Right ventricle myocardium inferior (tissue), 1 donor: ENCODE measurements at regions of chr11 and their contacts with region 1.

Region 1: DNA sequence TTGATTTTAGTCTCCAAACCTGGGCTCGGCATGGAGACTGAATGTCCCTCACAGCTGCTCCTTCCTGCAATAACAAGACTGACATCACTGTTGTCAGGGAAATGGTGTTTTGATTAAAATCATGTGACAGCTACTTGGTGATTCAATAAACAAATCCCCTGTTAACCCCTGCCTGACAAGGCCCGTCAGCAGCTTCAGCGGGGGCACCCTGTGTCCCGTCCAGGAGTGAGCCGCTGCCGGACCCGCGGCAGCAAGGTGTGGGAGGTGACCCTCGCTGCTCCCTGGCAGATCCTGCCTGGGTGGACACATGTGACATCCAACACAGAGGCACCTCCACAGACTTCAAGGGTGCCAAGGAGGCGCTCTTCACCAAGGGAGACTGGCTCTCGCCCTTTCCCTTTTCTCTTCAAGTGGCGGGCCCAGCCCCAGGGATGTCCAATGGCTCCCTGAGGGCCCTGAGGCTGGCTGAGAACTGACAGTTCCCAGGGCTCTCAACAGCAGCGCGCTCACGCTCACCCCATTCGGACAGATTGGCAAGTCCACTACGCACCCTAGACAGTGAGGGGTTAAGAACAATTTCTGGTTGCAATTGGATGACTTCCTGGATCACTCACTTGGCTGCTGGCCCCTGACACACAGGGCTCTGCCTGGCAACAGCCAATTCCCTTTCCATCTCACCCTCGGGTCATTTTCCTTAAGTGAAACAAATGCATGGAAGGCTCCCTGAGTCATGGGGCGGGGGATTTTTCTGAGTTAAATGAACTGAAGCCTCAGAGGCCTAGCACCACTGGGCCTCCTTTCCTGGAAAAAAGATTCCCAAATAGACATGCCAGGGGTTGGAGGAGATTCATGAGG is 30.7 kb downstream of the PPP2R1B start:
- DNase-seq: peak; percentile 81
- ATAC-seq: peak; percentile 77

Region 2: GRCh38 chr11:111676878-111677585 is 58.5 kb before region 1 on chr11:
- intact Hi-C with region 1: no loop called
- DNase-seq: no peak
- ATAC-seq: no peak

Region 3: DNA sequence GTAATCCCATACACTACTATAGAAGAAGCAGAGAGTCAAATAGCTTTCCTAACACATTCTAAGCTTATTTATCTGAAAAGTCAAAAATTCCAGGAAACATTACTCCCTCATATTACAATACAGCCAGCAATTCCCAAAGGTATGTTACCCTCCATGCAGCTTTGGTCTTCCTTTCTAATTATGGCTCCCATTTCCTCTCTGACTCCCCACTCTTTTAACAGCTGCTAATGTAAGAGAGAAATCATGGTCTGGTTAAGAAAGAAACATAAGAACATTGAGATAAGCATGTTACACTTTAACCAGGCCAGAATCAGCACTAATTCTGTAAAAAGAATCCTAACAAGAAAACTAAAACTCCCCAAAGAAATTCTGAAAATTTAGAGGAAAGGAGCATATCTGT is 23.9 kb after region 1 on chr11:
- intact Hi-C with region 1: loop called (anchors 2 kb)
- DNase-seq: no peak
- ATAC-seq: no peak

Region 4: GRCh38 chr11:111841370-111842053 is 106.0 kb after region 1 on chr11:
- intact Hi-C with region 1: no loop called
- DNase-seq: peak; percentile 91
- ATAC-seq: peak; percentile 88